MCF 10A (cell line): ENCODE measurements at regions of chr2 and their contacts with region 1.

Region 1: GRCh38 chr2:12948961-12949353 is 232.2 kb downstream of the TRIB2 start:
- DNase-seq: no peak
- H3K4me3 Mint-ChIP-seq: no peak overlapping the region
- H3K27ac Mint-ChIP-seq: no peak overlapping the region
- H3K4me1 Mint-ChIP-seq: peaks cover 6% of the 10 kb centered on the region
- H3K27me3 Mint-ChIP-seq: no peaks in the 10 kb centered on the region
- CTCF ChIP-seq: no peak

Region 2: GRCh38 chr2:12918138-12918834 is 30.7 kb before region 1 on chr2:
- CTCF ChIA-PET with region 1: no interaction called
- POLR2A ChIA-PET with region 1: no interaction called
- intact Hi-C with region 1: no loop called
- DNase-seq: no peak
- H3K4me3 Mint-ChIP-seq: no peak overlapping the region
- H3K27ac Mint-ChIP-seq: no peak overlapping the region
- H3K4me1 Mint-ChIP-seq: peaks cover 6% of the 10 kb centered on the region
- H3K27me3 Mint-ChIP-seq: no peaks in the 10 kb centered on the region
- CTCF ChIP-seq: no peak

Region 3: GRCh38 chr2:12970861-12971260 is 21.9 kb after region 1 on chr2:
- CTCF ChIA-PET with region 1: no interaction called
- POLR2A ChIA-PET with region 1: interaction called, 10 read pairs
- intact Hi-C with region 1: no loop called
- DNase-seq: peak; percentile 70
- H3K4me3 Mint-ChIP-seq: no peak overlapping the region
- H3K27ac Mint-ChIP-seq: no peak overlapping the region
- H3K4me1 Mint-ChIP-seq: peaks cover 5% of the 10 kb centered on the region
- H3K27me3 Mint-ChIP-seq: no peaks in the 10 kb centered on the region
- CTCF ChIP-seq: no peak

Region 4: GRCh38 chr2:13584020-13584419 is 635.1 kb after region 1 on chr2:
- CTCF ChIA-PET with region 1: no interaction called
- POLR2A ChIA-PET with region 1: no interaction called
- intact Hi-C with region 1: no loop called
- DNase-seq: no peak
- H3K4me3 Mint-ChIP-seq: no peak overlapping the region
- H3K27ac Mint-ChIP-seq: no peak overlapping the region
- H3K4me1 Mint-ChIP-seq: peaks cover 5% of the 10 kb centered on the region
- H3K27me3 Mint-ChIP-seq: no peaks in the 10 kb centered on the region
- CTCF ChIP-seq: no peak